ENCODE measurements at regions of chrX and their contacts with region 1.

Region 1: GRCh38 chrX:13646154-13646549 is 6.8 kb upstream of the TCEANC start:
- DNase-seq: peak; percentile 71 to 86
- H3K4me3 ChIP-seq: no peak overlapping the region
- H3K27ac ChIP-seq: no peak overlapping the region
- H3K4me1 ChIP-seq: peaks cover 0 to 16% (median 0%) of the 10 kb centered on the region in 4 donors
- H3K27me3 ChIP-seq: peaks cover 0 to 5% (median 0%) of the 10 kb centered on the region in 3 donors
- CTCF ChIP-seq: peak in 5 of 7 experiments; percentile 29 to 65 (median 58)
- EP300 ChIP-seq: no peak
- POLR2A ChIP-seq: no peak

Region 2: DNA sequence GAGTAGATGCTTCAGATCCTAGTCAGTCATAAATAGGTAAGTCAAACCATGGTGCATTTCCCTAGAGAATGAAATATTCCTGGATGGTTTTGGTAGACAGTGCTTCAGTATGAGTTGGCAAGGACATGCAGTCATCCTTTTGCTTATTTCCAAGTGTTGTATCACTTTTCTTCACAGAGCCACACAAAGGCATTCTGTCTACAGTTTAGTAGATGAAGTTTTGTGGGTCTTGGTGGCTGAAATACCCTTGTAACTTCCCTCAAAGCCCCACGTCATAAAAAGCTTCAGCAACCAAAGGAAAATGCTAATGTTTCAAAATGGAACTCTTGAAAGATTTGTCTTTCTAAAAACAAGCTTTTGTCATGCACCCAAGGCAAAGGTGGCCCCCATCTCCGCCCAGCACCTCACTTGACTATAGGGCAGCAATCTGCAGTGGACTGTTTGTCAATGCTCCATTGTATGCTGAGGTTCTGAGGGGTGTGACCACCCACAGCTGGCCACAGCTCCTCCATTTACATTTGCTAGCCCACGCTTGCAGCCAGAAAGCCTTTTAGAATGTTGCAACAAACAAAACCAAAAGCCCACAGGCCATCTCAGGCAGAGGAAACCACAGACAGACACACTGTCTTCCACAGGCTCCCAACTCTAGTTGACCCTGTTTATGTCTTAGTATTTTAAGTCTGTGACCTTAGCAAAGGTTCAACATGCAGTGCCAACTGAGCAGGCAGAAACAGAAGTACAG is 514.6 kb before region 1 on chrX:
- intact Hi-C with region 1: no loop called
- DNase-seq: no peak
- H3K4me3 ChIP-seq: no peak overlapping the region
- H3K27ac ChIP-seq: no peak overlapping the region
- H3K4me1 ChIP-seq: peaks cover 0 to 14% (median 3%) of the 10 kb centered on the region in 4 donors
- H3K27me3 ChIP-seq: no peaks in the 10 kb centered on the region
- CTCF ChIP-seq: no peak
- EP300 ChIP-seq: no peak
- POLR2A ChIP-seq: no peak

Region 3: DNA sequence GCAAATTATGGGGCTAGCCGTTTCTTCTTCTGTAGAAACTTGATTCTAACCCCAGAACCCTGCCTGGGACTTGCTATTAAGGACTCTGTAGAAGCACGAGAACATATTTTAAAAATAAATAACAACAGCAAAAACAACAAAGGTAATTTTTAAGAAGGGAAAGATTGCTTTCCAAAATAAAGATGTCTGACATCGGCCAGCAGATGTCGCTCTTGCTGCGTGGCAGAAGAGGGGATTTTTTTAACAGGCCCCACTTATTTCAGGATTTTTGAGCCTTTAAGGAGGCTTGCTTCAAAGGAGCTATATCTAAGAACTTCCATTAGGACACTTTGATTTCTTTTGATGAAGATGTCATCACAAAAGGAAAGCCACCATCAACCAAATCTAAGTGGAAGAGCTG is 139.6 kb before region 1 on chrX:
- intact Hi-C with region 1: loop called (anchors 5 kb)
- DNase-seq: peak; percentile 48 to 76
- H3K4me3 ChIP-seq: no peak overlapping the region
- H3K27ac ChIP-seq: no peak overlapping the region
- H3K4me1 ChIP-seq: peaks cover 0 to 3% (median 0%) of the 10 kb centered on the region in 4 donors
- H3K27me3 ChIP-seq: no peaks in the 10 kb centered on the region
- CTCF ChIP-seq: peak in 5 of 7 experiments; percentile 30 to 72 (median 60)
- EP300 ChIP-seq: no peak
- POLR2A ChIP-seq: no peak

Region 4: GRCh38 chrX:14029425-14030173 is 383.4 kb after region 1 on chrX and contains the start of gene GEMIN8:
- intact Hi-C with region 1: loop called (anchors 10 kb)
- DNase-seq: peak; percentile 88 to 97
- H3K4me3 ChIP-seq: peak within 1 kb of the TSS; percentile 55 to 65 (median 64)
- H3K27ac ChIP-seq: peak within 1 kb of the TSS; percentile 88 to 94 (median 90)
- H3K4me1 ChIP-seq: peaks cover 0 to 40% (median 17%) of the 10 kb centered on the region in 4 donors
- H3K27me3 ChIP-seq: peaks cover 0 to 11% (median 0%) of the 10 kb centered on the region in 3 donors
- CTCF ChIP-seq: no peak
- EP300 ChIP-seq: no peak
- POLR2A ChIP-seq: no peak
- total RNA-seq, gene GEMIN8: 4.3 to 33.5 (median 10.5) TPM

Measured in stomach (tissue), 19 donors.